ENCODE measurements at regions of chr1 and their contacts with region 1.

Region 1: DNA sequence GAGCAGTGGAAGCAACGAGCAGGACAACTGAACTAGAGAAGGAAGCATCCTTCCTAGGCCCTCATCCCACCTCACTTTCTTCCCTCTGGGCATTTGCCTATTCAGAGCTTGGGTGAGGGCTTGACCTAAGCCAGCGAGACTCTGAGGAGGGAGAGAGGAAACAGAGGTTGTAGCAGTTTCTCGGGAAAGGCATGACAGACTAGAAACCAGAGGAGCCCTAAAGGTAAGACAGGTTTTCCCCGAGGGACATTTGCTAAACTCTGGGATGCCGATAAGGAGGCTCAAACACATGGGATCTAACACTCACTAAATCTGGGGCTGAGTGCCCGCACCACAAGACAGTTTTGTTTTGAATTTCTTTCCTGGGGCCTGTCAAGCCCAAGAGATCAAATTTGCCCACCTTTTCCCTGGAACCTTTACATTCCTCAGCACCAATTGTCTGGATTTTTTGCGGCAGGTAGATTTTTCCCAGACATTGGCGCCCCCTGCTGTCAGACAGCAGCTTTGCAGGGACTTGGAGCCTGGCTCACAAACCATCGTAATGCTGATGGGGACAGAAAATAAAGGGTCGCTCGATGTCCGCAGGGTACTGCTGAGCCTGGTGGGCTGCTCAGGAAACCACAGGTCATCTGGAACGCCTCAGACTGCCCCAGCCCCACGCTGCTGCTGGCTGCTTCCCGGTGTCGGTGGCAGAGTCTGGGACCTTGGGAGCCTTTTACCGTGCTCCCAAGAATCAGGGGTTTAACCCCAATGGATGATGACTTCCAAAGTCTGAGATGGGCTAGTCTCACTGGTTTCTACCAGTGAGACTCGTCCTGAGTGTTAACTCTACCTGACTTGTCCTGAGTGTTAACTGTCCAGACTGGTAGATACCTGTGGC is 23.4 kb upstream of the TSPAN2 start:
- DNase-seq: peak; percentile 18 to 62 (median 40)
- ATAC-seq: peak; percentile 61
- H3K4me3 ChIP-seq: no peak overlapping the region
- H3K4me3 Mint-ChIP-seq: no peak overlapping the region
- H3K27ac ChIP-seq: no peak overlapping the region
- H3K27ac Mint-ChIP-seq: peak overlapping the region in 5 of 9 donors; percentile 23 to 63 (median 39)
- H3K4me1 ChIP-seq: no peaks in the 10 kb centered on the region
- H3K4me1 Mint-ChIP-seq: peaks cover 0 to 18% (median 8%) of the 10 kb centered on the region in 7 donors
- H3K27me3 ChIP-seq: no peaks in the 10 kb centered on the region
- H3K27me3 Mint-ChIP-seq: peaks cover 0 to 3% (median 0%) of the 10 kb centered on the region in 5 donors

Region 2: GRCh38 chr1:114979278-114979891 is 133.4 kb before region 1 on chr1:
- CTCF ChIA-PET with region 1: interaction called, 25 read pairs
- POLR2A ChIA-PET with region 1: no interaction called
- intact Hi-C with region 1: loop called (anchors 1 kb)
- DNase-seq: peak; percentile 32 to 69 (median 56)
- ATAC-seq: peak; percentile 76
- H3K4me3 ChIP-seq: no peak overlapping the region
- H3K4me3 Mint-ChIP-seq: no peak overlapping the region
- H3K27ac ChIP-seq: no peak overlapping the region
- H3K27ac Mint-ChIP-seq: no peak overlapping the region
- H3K4me1 ChIP-seq: no peaks in the 10 kb centered on the region
- H3K4me1 Mint-ChIP-seq: no peaks in the 10 kb centered on the region
- H3K27me3 ChIP-seq: no peaks in the 10 kb centered on the region
- H3K27me3 Mint-ChIP-seq: peaks cover 5 to 23% (median 14%) of the 10 kb centered on the region in 5 donors

Region 3: DNA sequence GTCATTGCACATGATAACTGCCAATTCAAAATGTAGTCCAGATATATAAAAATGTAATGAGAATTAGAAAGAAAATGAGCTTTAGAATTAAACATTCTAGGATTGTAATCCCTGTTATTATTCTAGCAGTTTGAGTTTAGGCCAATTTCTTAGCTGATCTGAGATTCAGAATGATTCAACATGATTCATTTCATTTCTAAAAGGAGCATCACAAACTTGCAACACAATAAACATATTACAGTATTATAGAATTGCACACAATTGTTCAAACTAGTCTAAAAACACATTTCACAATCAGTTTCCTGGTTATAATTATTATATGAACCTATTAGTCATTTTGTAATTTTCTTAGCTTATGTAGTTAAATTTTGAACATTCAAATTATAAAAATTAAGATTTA is 126.5 kb before region 1 on chr1:
- CTCF ChIA-PET with region 1: interaction called, 22 read pairs
- POLR2A ChIA-PET with region 1: no interaction called
- intact Hi-C with region 1: no loop called
- DNase-seq: no peak
- ATAC-seq: no peak
- H3K4me3 ChIP-seq: no peak overlapping the region
- H3K4me3 Mint-ChIP-seq: no peak overlapping the region
- H3K27ac ChIP-seq: no peak overlapping the region
- H3K27ac Mint-ChIP-seq: no peak overlapping the region
- H3K4me1 ChIP-seq: no peaks in the 10 kb centered on the region
- H3K4me1 Mint-ChIP-seq: no peaks in the 10 kb centered on the region
- H3K27me3 ChIP-seq: no peaks in the 10 kb centered on the region
- H3K27me3 Mint-ChIP-seq: peaks cover 0 to 13% (median 10%) of the 10 kb centered on the region in 5 donors

Region 4: GRCh38 chr1:115052454-115053083 is 60.2 kb before region 1 on chr1:
- CTCF ChIA-PET with region 1: interaction called, 29 read pairs
- POLR2A ChIA-PET with region 1: no interaction called
- intact Hi-C with region 1: loop called (anchors 1 to 2 kb)
- DNase-seq: peak in 8 of 9 donors; percentile 18 to 58 (median 47)
- ATAC-seq: peak; percentile 94
- H3K4me3 ChIP-seq: no peak overlapping the region
- H3K4me3 Mint-ChIP-seq: no peak overlapping the region
- H3K27ac ChIP-seq: no peak overlapping the region
- H3K27ac Mint-ChIP-seq: no peak overlapping the region
- H3K4me1 ChIP-seq: no peaks in the 10 kb centered on the region
- H3K4me1 Mint-ChIP-seq: peaks cover 0 to 5% (median 4%) of the 10 kb centered on the region in 7 donors
- H3K27me3 ChIP-seq: no peaks in the 10 kb centered on the region
- H3K27me3 Mint-ChIP-seq: peaks cover 0 to 12% (median 0%) of the 10 kb centered on the region in 5 donors

Measured in naive thymus-derived CD4-positive, alpha-beta T cell (primary cell).